AG04449 (cell line): ENCODE measurements at regions of chr17 and their contacts with region 1.

Region 1: GRCh38 chr17:57597531-57598453 is 147.3 kb downstream of the CCDC182 start:
- DNase-seq: peak; percentile 36
- H3K4me3 ChIP-seq: no peak overlapping the region
- CTCF ChIP-seq: peak; percentile 83

Region 2: DNA sequence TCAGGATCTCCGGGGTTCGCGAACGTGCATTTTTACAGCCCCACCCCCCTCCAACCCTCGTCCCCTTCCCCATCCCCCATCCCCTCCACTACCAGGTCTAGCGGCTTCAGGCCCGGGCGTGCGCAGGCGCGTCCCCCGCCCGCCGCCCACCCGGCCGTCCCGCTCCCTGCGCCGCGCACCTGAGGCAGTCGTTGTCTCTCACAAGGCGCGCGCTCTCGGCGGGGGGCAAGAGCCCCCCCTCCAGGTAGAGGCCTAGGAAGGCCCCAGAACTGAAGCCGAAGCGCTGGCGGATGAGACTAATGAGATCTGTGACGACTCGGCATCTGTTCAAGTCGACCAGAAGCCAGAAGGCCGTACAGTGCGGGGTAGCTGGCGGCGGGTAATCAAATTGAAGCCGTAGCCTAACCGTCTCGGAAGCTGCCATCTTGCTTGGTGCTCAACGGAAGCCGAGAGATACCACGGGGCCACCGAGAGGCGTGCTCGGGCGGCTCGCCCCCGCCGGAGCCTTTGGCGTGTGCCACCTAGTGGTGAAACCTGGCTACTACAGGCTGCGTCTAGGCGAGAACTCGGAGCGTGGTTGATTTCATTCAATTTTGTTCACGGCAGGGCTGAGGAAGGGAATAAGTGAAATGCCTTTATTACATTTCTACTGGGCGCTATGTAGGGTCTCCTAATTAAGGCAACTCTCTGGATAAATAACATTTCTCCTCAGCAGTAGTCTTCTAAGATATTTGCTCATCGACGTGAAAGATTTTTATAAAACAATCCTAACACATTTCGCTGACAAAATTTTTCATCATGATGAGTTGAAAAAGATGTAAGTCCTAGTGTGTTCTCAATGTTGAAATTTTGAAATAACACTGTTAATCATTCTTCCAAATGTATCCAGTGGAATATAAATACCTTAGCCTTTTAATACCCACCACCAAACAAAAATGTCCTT is 636.9 kb before region 1 on chr17 and contains the start of gene COIL:
- CTCF ChIA-PET with region 1: no interaction called
- POLR2A ChIA-PET with region 1: no interaction called
- DNase-seq: peak; percentile 49
- H3K4me3 ChIP-seq: peak within 1 kb of the TSS; percentile 84
- CTCF ChIP-seq: peak; percentile 98

Region 3: DNA sequence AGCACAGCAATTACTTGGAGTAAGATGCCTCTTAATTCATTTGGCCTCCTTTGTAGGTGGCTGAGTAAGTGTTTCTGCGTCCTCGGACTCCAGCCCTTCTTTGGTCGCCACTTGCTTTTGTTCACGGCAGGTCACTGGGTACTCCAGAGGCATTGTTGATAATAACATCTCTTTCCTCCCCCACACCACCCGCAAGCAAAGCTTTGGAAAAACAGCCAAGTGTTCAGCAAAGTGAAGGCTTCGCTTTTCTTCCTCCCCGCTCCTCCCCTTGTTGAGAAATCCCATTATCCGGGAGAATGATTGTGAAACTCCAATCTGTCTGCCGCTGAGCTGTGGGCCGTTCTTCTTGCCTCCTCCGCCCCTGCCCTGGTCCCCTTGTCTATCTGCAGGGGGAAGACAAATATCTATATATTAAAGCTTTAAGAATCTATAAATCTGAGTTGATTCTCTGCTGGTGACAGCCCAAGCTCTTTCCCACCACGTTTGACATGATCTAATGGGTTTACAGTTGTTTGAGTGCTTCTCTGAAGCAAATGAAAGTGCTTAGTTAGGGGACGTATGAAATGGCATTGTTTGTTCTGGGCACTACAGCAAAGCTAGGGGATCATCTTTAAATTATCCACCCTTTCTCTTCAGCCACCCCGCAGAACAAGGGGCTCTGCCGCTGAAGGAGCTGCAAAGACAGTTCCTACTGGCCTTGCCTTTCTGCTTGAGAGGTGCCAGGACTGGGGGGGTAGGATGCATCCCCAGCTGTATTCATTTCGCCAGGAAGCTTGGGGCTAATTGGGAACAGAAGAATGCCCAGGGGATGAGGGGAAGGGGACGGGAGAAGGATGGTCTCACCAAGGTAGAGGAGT is 19.8 kb before region 1 on chr17:
- CTCF ChIA-PET with region 1: interaction called, 40 read pairs
- POLR2A ChIA-PET with region 1: no interaction called
- DNase-seq: no peak
- H3K4me3 ChIP-seq: peak overlapping the region; percentile 12; the same call in 1 of the 2 replicates
- CTCF ChIP-seq: no peak

Region 4: DNA sequence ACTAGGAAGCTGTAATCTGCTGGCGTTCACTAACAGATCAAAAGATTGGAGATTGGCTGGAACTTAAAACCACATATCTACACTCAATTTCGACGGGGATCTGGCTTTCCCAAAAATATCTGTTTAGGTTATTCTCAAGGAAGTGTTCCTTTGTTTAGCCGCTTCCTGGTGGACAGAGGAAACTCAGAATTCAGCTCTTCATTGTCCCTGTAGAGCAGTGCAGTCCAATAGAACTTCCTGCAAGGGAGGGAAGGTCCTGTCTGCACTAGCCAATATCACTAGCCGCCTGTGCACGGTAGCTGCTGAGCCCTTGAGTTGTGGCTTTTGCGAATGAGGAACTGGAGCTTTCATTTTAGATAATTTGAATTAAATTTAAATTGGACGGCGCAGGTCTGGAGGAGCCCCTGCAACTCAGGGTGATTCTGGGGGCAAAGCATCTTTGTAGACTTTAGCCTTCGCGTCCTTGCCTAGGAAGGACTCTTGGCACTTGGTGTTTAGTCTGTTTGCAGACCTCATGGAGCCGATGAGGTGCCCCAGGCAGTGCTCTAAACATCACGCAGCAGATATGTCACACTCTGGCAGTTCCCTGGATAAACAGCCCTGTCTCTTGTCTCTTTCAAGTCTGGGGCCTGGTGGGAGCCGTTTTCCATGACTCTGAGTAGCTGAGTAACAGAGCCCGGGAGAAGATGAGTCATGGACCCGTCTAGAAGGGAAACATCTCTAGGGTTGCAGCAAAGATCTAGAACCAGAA is 25.1 kb after region 1 on chr17:
- CTCF ChIA-PET with region 1: interaction called, 54 read pairs
- POLR2A ChIA-PET with region 1: no interaction called
- DNase-seq: peak; percentile 26
- H3K4me3 ChIP-seq: no peak overlapping the region
- CTCF ChIP-seq: no peak

Region 5: GRCh38 chr17:57662644-57663308 is 65.0 kb after region 1 on chr17:
- CTCF ChIA-PET with region 1: interaction called, 43 read pairs
- POLR2A ChIA-PET with region 1: no interaction called
- DNase-seq: peak; percentile 95
- H3K4me3 ChIP-seq: peak overlapping the region; percentile 34
- CTCF ChIP-seq: no peak

Region 6: GRCh38 chr17:57696050-57696449 is 98.3 kb after region 1 on chr17:
- CTCF ChIA-PET with region 1: interaction called, 11 read pairs
- POLR2A ChIA-PET with region 1: no interaction called
- DNase-seq: no peak
- H3K4me3 ChIP-seq: no peak overlapping the region
- CTCF ChIP-seq: no peak

Region 7: DNA sequence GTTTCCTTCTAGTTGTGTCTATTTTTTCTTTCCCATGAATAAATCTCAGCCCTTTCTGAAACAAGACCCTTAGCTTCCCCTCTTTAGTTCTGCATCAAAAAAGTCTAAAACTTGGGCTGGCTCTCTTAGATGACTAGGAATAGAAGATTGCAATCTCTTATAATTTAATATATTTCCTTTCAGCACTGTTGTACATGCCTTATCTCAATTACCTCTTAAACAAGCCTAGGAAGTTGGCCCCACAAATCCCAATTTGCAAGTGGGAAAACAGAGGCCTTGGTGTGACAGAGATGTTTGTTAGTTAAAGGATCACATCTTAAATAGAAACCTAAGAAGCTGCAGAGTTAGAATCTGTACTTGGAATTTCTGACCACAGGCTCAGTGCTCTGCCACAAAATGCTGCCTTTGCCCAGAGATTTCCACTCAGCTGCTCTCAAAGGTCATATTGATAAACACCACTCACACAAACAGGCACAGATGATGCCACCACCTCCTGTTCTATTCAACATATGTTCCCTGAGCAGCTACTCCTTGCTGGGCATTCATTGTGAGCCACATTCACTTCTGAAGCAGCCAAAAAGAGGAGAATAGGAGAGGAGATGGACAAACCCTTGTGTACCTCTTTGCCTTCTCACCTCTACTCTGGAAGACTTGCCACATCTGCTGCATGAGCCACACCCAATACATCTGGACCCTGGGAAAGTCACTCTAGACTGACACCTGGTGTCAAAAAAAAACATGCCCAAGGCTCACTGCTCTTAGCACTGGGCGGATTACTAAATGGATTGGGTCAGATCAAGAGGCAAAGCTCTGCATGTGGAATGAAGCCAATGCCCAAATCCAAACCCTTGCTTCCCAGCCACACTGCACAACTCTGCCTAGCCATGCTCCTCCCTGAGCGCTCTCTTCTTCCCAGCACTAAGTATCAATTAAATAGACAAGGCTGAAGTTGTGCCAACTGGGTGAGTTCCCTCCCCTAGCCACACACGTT is 141.9 kb after region 1 on chr17:
- CTCF ChIA-PET with region 1: interaction called, 19 read pairs
- POLR2A ChIA-PET with region 1: no interaction called
- DNase-seq: no peak
- H3K4me3 ChIP-seq: no peak overlapping the region
- CTCF ChIP-seq: no peak

Region 8: DNA sequence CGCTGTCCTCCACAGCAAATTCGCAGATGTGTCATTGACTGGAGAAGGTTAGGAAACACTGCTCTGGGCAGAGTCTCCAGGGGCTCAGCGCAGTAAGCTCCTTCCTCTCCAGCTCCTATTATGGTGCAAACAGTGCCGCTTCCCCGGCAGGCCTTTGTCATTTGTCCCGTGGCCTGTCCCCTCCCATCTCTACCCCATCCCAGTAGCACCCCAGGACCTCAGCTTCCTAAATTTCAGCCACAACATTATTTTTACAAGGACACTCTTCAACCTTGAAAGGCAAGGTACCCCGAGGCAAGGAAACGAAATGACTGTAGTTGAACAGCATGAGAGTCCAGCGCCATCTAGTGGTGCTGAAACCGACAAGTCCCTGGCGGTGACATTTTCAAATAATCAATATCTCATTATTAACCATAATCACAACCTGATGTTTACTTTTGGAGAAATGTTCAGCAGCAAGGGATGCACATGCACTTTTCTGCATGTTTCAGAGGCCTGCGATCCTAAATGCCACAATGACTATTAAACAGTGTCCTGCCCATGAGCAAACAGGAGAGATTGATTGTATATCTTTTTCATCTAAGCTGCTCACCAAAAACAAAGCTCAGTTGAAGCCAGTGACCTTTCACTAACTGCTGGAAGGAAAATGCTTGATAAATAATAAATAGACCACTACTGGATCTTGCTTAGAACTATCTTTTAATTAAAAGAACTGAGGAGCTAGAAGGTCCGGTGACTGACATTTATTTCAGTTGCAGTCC is 235.6 kb after region 1 on chr17:
- CTCF ChIA-PET with region 1: interaction called, 11 read pairs
- POLR2A ChIA-PET with region 1: no interaction called
- DNase-seq: no peak
- H3K4me3 ChIP-seq: peak overlapping the region; percentile 58
- CTCF ChIP-seq: peak; percentile 78

Region 9: DNA sequence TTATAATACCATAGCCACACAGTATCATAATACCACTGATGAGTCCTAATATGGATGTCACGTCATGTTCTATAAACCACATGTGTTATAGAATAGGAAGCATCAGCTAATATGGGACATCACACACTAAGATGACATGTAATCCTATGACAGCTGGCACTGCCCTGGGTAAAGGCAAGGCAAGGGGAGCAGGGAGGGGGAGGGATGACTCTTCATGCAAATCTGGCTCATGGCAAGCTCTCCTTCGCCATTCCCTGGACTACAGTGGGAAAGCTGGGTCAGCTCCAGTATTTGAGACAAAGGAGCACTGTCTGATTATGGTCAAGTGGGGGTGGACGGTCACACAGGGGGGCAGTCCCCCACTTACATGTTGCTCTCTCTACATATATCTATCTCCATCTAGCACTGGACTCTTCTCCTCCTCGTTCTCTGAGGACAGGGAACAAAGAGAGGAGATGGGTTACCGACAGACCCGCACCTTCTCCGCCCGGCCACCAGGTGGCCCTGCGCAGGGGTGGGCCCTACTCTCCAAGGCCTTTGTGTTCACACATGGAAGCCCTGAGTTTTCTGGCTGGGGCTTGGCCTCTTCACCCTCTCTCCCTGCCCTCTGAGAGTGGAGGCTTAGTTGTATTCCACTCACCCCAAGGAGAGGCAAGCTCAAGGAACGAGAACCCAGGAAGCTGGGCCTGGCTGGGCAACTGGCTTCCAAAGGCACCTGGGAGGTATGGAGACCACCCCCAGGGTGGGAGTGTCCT is 706.4 kb after region 1 on chr17:
- CTCF ChIA-PET with region 1: no interaction called
- POLR2A ChIA-PET with region 1: no interaction called
- DNase-seq: no peak
- H3K4me3 ChIP-seq: no peak overlapping the region
- CTCF ChIP-seq: peak; percentile 85